Sigmoid colon (tissue), 7 donors: ENCODE measurements at regions of chr1 and their contacts with region 1.

Region 1: GRCh38 chr1:205658943-205659581 is 21.2 kb downstream of the SLC45A3 start:
- DNase-seq: peak; percentile 88
- H3K4me3 ChIP-seq: no peak overlapping the region
- H3K27ac ChIP-seq: no peak overlapping the region
- H3K4me1 ChIP-seq: peaks cover 0 to 4% (median 1%) of the 10 kb centered on the region in 4 donors
- H3K27me3 ChIP-seq: no peaks in the 10 kb centered on the region
- CTCF ChIP-seq: peak; percentile 74 to 87 (median 80)
- EP300 ChIP-seq: no peak
- POLR2A ChIP-seq: no peak

Region 2: GRCh38 chr1:205528887-205529825 is 129.9 kb before region 1 on chr1:
- intact Hi-C with region 1: loop called (anchors 5 kb)
- DNase-seq: peak; percentile 89
- H3K4me3 ChIP-seq: peak overlapping the region in 3 of 4 donors; percentile 20 to 45 (median 41)
- H3K27ac ChIP-seq: peak overlapping the region in 1 of 4 donors; percentile 21
- H3K4me1 ChIP-seq: peaks cover 0 to 12% (median 9%) of the 10 kb centered on the region in 4 donors
- H3K27me3 ChIP-seq: no peaks in the 10 kb centered on the region
- CTCF ChIP-seq: peak; percentile 61 to 97 (median 82)
- EP300 ChIP-seq: no peak
- POLR2A ChIP-seq: no peak

Region 3: GRCh38 chr1:205591522-205592351 is 67.3 kb before region 1 on chr1:
- intact Hi-C with region 1: loop called (anchors 1 kb)
- DNase-seq: peak; percentile 92
- H3K4me3 ChIP-seq: peak overlapping the region; percentile 15 to 50 (median 42)
- H3K27ac ChIP-seq: peak overlapping the region in 1 of 4 donors; percentile 28
- H3K4me1 ChIP-seq: peaks cover 0 to 11% (median 3%) of the 10 kb centered on the region in 4 donors
- H3K27me3 ChIP-seq: no peaks in the 10 kb centered on the region
- CTCF ChIP-seq: peak; percentile 99
- EP300 ChIP-seq: no peak
- POLR2A ChIP-seq: no peak

Region 4: GRCh38 chr1:205711104-205712020 is 52.3 kb after region 1 on chr1:
- intact Hi-C with region 1: loop called (anchors 2 kb)
- DNase-seq: no peak
- H3K4me3 ChIP-seq: no peak overlapping the region
- H3K27ac ChIP-seq: peak overlapping the region in 1 of 4 donors; percentile 8
- H3K4me1 ChIP-seq: peaks cover 0 to 23% (median 10%) of the 10 kb centered on the region in 4 donors
- H3K27me3 ChIP-seq: no peaks in the 10 kb centered on the region
- CTCF ChIP-seq: peak; percentile 41 to 88 (median 79)
- EP300 ChIP-seq: no peak
- POLR2A ChIP-seq: no peak

Region 5: GRCh38 chr1:205977402-205978014 is 318.4 kb after region 1 on chr1:
- intact Hi-C with region 1: loop called (anchors 1 kb)
- DNase-seq: peak; percentile 76
- H3K4me3 ChIP-seq: no peak overlapping the region
- H3K27ac ChIP-seq: no peak overlapping the region
- H3K4me1 ChIP-seq: peaks cover 0 to 4% (median 0%) of the 10 kb centered on the region in 4 donors
- H3K27me3 ChIP-seq: no peaks in the 10 kb centered on the region
- CTCF ChIP-seq: peak; percentile 64 to 92 (median 90)
- EP300 ChIP-seq: no peak
- POLR2A ChIP-seq: no peak